ENCODE measurements at regions of chr15 and their contacts with region 1.

Region 1: DNA sequence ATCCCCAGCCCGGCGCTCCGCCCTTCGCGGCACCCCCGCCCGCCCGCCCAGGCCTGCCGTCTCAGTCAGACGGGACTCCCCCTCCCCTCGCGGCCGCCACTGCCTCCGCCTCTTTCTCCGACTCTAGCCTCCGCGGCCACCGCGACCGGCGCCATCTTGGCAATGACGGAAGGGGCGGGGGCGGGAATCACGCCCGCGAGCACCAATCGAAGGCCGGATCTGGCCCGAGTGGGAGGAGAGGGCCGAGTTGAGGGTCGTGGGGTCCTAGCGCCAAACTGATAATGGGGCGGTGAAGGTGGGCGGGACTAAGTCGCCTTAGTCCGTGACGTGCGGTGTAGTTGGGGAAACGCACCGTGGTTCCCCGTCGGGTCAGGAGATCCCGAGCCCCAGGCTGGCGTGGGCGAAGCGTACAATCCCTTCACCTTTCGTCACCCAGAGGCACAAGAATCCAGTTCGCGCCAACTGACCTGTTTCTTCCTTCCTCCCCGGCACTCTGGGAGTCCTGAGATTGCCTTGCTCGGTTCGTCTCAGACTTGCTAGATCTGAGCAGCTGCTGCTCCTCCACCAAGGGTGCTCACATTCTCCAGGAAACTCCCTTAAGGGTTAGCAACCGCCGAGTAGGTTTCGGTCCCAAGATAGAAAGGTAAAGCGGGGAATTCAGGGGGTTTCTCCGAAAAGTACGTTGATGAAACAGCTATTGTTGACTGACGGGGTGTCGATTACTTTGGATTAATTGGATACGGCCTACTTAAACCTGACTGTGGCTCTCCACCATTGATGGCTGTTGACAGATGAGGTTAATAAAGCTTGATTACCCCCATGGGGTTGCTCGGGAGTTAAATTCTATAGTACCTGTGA is at the start of gene DENND4A:
- DNase-seq: peak; percentile 89

Region 2: GRCh38 chr15:65723876-65724275 is 68.5 kb before region 1 on chr15:
- CTCF ChIA-PET with region 1: no interaction called
- POLR2A ChIA-PET with region 1: no interaction called
- DNase-seq: no peak

Region 3: GRCh38 chr15:65824031-65824743 is 31.8 kb after region 1 on chr15:
- CTCF ChIA-PET with region 1: interaction called, 6 read pairs
- POLR2A ChIA-PET with region 1: interaction called, 19 read pairs
- DNase-seq: peak; percentile 74

Region 4: DNA sequence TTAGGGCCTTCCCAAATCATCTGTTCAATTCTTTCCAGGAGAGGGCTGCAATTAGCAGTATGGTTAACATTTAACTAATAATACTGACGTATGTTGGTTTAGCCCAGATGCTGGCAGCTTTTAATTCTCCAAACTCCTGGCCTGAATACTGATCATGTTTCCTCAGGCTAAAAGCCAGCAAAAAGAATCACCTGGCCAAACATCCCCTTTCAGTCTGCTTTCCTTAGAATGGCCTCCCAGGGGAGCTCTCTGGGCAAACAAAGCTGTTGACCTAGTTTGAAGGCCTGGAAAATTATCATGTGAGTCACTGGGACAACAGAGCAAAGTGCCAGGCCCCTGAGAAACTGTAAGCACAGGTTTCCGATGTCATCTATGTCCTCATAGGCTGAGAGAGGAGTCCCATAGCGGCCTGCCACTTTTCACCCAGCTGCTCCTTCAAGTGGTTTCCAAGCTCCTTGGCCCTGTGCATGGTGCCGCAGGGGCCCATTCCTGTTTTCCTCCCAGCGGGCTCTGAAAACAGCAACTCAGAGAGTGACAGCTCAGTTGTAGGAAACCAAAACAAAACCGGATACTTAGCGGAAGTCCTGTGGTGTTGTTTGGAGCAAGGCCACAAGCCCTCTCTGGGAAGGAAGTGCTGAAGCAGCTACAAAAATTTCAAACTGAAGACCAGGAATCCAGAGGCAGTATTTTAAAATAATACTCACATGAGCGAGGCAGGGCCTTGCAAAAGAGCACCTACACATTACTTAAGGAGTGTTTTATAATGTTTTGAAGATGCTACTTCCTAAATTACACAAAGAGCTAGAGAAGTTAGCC is 40.4 kb after region 1 on chr15:
- CTCF ChIA-PET with region 1: no interaction called
- POLR2A ChIA-PET with region 1: interaction called, 11 read pairs
- DNase-seq: peak; percentile 76

Measured in HEK293T (cell line).